Activated naive CD4-positive, alpha-beta T cell treated with anti-CD3 and anti-CD28 coated beads for 36 hours (primary cell): ENCODE measurements at regions of chr6 and their contacts with region 1.

Region 1: DNA sequence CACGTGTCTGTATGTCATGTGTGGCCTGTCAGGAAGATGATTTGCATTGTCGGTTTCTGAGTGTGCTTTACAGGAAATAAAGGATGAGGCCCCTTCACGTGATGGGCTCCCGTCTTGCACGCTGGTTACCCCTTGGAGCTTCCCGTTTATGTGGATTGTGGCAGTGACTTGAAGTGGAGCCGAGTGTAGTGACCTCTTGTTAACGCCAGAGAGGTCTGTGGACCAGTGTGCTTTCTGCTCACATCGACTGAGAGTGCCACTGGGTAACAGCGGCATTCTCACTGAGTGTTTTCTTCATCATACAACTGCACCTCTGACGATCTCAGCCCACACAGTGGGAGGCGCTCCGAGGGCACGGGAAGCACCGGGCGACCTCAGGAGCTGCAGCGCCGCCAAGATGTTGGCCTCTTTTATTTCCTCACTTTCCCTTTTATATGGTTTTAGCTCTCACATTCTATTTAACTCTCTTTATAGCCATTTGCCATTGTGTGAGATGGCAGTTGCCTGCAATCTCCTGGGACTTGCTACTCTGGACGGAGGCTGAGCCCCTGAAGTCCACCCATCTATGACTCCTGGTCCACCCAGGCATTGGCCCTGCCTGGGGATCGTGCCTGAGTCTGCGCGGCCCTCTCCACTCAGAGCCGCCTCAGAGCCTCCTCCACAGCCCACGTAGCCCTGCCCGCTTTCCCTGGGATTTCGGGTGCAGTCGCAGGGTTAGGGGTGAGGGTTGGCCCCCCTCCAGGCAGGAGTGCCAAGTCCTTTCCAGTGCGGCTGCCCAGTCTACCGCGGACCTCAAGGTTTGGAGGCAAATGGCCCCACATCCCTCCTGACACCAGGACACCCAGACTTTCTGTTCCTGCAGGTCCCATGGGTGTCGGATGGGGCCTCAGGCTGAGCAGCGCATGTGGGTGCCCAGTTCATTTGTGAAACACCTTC is 238.9 kb downstream of the ERMARD start:
- DNase-seq: peak; percentile 89
- H3K4me3 Mint-ChIP-seq: peak overlapping the region; percentile 65
- H3K27ac Mint-ChIP-seq: peak overlapping the region; percentile 93
- H3K4me1 Mint-ChIP-seq: peaks cover 37% of the 10 kb centered on the region
- H3K27me3 Mint-ChIP-seq: no peaks in the 10 kb centered on the region

Region 2: GRCh38 chr6:169723200-169723909 is 267.0 kb before region 1 on chr6:
- CTCF ChIA-PET with region 1: no interaction called
- intact Hi-C with region 1: loop called (anchors 2 kb)
- DNase-seq: peak; percentile 62
- H3K4me3 Mint-ChIP-seq: peak overlapping the region; percentile 84
- H3K27ac Mint-ChIP-seq: peak overlapping the region; percentile 94
- H3K4me1 Mint-ChIP-seq: peaks cover 43% of the 10 kb centered on the region
- H3K27me3 Mint-ChIP-seq: no peaks in the 10 kb centered on the region

Region 3: GRCh38 chr6:169950558-169950957 is 39.8 kb before region 1 on chr6:
- CTCF ChIA-PET with region 1: no interaction called
- intact Hi-C with region 1: loop called (anchors 2 kb)
- DNase-seq: peak; percentile 66
- H3K4me3 Mint-ChIP-seq: no peak overlapping the region
- H3K27ac Mint-ChIP-seq: no peak overlapping the region
- H3K4me1 Mint-ChIP-seq: no peaks in the 10 kb centered on the region
- H3K27me3 Mint-ChIP-seq: no peaks in the 10 kb centered on the region

Region 4: GRCh38 chr6:170004585-170005210 is 14.3 kb after region 1 on chr6:
- CTCF ChIA-PET with region 1: interaction called, 3 read pairs
- intact Hi-C with region 1: loop called (anchors 1 kb)
- DNase-seq: peak; percentile 30
- H3K4me3 Mint-ChIP-seq: no peak overlapping the region
- H3K27ac Mint-ChIP-seq: no peak overlapping the region
- H3K4me1 Mint-ChIP-seq: peaks cover 7% of the 10 kb centered on the region
- H3K27me3 Mint-ChIP-seq: peaks cover 2% of the 10 kb centered on the region

Region 5: DNA sequence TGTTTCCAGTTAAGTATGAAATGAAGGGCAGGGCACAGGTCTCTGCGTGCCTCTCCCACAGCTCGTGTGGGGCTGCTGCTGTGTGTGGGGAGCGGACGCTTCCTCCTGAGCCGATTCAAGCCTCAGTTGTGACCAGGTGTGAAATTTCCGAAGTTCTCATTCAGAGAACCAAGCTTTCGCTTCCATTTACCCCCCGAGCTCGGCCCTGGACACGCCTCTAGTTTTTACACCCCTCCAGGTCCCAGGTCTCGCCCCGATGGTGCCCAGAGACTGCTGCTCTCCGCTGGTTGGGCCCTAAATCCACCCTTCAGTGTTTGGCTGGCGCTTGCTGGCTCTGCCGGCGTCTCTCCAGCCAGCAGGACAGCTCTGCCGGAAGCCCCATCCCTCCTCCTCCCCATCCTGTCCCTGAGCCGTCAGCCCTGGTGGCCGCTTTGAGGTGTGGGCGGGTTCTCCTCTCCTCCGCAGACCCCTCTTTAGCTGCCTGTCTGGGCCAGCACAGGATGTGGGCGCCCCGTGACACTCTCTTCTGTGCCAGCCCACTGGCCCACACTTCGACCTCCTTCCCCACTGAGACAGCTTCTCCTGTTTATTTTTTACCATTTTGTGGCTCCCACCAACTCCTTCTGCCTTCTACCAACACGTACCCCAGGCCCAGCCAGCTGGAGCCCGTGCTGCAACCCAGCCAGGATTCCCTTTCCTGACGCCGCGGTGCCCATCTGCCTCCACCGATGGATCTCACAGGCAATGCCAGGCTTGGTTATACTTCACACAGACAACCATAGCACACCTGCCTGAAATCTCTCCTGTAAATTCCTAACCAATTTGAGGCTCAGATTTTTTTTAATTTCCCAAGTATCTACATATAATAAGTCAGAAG is 157.7 kb after region 1 on chr6:
- CTCF ChIA-PET with region 1: no interaction called
- intact Hi-C with region 1: loop called (anchors 5 kb)
- DNase-seq: peak; percentile 65
- H3K4me3 Mint-ChIP-seq: peak overlapping the region; percentile 52
- H3K27ac Mint-ChIP-seq: peak overlapping the region; percentile 66
- H3K4me1 Mint-ChIP-seq: peaks cover 39% of the 10 kb centered on the region
- H3K27me3 Mint-ChIP-seq: peaks cover 3% of the 10 kb centered on the region

Region 6: DNA sequence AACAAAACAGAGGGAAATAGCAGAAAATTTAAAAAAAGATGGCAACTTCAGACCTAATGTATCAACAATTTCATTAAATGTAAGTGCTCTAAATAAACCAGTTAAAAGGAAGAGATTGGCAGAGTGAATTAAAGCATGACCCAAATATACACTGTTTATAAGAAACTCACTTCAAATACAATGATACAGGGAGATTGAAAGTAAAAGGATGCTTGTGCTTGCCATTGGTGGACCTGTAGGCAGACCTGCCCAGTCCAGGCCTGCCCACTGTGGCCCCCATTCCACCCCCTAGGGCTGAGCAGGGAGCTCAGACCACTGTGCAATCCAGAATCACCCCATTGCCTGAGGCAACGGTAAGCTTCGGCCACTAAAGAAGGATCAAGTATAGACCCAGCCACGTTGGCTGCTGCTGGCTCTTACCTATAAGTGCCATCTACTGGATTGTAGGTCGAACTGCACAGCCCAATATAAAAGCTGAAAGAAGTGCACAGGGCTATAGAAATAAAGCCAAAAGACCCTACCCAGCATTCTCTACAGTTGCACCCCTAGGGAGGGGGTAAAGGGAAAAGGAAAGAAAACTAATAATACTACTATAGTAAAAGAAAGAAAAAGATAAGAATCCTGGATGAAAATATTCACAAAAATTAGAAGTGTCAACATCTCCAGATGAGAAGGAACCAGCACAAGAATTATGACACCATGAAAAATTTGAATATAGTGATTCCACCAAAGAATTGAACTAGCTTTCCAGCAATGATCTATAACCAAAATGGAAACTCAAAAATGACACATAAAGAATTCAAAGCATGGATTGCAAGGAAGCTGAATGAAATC is 526.6 kb after region 1 on chr6:
- CTCF ChIA-PET with region 1: no interaction called
- intact Hi-C with region 1: loop called (anchors 1 kb)
- DNase-seq: peak; percentile 54
- H3K4me3 Mint-ChIP-seq: peak overlapping the region; percentile 28
- H3K27ac Mint-ChIP-seq: no peak overlapping the region
- H3K4me1 Mint-ChIP-seq: no peaks in the 10 kb centered on the region
- H3K27me3 Mint-ChIP-seq: peaks cover 24% of the 10 kb centered on the region